Adrenal gland (tissue), 19 donors: ENCODE measurements at regions of chr2 and their contacts with region 1.

Region 1: GRCh38 chr2:197705121-197705911 is at the start of gene MARS2:
- DNase-seq: peak; percentile 92 to 96 (median 95)
- H3K4me3 ChIP-seq: peak within 1 kb of the TSS; percentile 78 to 92 (median 86)
- H3K27ac ChIP-seq: peak within 1 kb of the TSS; percentile 75 to 89 (median 85)
- H3K4me1 ChIP-seq: peaks cover 14 to 41% of the 10 kb centered on the region in 2 donors
- H3K27me3 ChIP-seq: no peaks in the 10 kb centered on the region
- CTCF ChIP-seq: no peak
- POLR2A ChIP-seq: peak in 1 of 2 donors; percentile 75
- total RNA-seq, gene MARS2: 7.0 to 24.9 (median 11.2) TPM

Region 2: GRCh38 chr2:197727011-197727410 is 21.7 kb after region 1 on chr2:
- intact Hi-C with region 1: no loop called
- DNase-seq: no peak
- H3K4me3 ChIP-seq: no peak overlapping the region
- H3K27ac ChIP-seq: no peak overlapping the region
- H3K4me1 ChIP-seq: no peaks in the 10 kb centered on the region
- H3K27me3 ChIP-seq: no peaks in the 10 kb centered on the region
- CTCF ChIP-seq: no peak
- POLR2A ChIP-seq: no peak

Region 3: GRCh38 chr2:197777823-197778407 is 72.6 kb after region 1 on chr2:
- intact Hi-C with region 1: loop called in 1 of 2 experiments (anchors 5 kb)
- DNase-seq: peak in 1 of 7 donors; percentile 19
- H3K4me3 ChIP-seq: no peak overlapping the region
- H3K27ac ChIP-seq: no peak overlapping the region
- H3K4me1 ChIP-seq: no peaks in the 10 kb centered on the region
- H3K27me3 ChIP-seq: no peaks in the 10 kb centered on the region
- CTCF ChIP-seq: peak; percentile 58 to 86 (median 74)
- POLR2A ChIP-seq: no peak